Psoas muscle (tissue), 8 donors: ENCODE measurements at regions of chr11 and their contacts with region 1.

Region 1: DNA sequence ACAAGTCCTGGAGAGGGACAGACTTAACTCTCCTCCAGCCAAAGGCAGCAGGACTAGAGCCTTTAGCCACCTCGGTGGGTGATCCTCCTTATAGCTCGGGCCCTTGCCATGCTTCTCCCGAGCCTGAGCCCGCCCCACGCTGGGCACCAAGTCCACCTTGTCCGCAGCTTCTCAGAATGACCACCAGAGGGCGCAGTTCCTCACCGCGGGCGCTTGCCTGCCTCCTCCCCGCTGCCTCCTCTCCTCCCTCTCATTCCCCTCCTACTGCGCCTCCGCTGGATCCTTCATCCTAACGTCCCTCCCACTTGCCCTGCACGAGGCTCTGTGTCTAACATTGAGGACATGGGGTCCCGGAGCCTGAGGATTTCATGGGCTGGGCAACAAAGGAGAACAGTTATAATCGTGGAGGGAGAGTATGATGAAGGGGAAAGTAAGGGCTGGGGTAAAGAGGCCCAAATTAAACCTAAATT is 11.3 kb upstream of the MOGAT2 start:
- DNase-seq: peak; percentile 67 to 80
- ATAC-seq: peak; percentile 78 to 97 (median 94)
- H3K4me3 ChIP-seq: no peak overlapping the region
- H3K27ac ChIP-seq: no peak overlapping the region
- H3K4me1 ChIP-seq: no peaks in the 10 kb centered on the region
- H3K27me3 ChIP-seq: no peaks in the 10 kb centered on the region
- CTCF ChIP-seq: peak; percentile 91

Region 2: DNA sequence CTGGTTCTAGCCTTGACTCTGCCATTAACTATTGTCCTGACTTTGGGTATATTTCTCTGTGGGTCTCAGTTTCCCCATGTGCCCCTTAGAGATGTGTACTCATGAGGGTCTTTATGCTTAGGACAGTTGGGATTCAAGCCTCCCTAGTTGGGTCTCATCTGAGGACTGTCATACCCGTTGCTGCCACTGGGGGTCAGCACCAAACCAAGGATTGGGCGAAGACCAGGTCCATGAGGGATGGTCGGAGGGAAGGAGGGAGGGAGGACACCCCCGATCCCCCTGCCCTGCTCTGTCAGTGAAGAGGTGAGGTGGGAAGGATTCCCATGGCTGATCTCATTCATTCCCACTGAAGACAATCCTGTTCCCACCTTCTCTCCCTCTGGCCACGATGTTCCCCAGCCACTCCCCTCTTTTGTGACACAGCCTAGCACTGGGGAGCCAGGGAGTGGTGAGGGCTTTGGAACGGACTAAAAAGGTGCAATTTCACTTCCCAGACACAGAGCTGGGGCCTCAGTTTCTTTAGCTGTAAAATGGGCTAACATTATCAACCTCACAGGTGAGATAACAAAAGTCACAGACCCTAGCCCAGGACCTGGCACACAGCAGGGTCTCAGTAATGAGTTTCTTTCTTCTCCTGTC is 260.9 kb before region 1 on chr11:
- intact Hi-C with region 1: no loop called
- DNase-seq: peak; percentile 75 to 84
- ATAC-seq: peak; percentile 83 to 95 (median 87)
- H3K4me3 ChIP-seq: no peak overlapping the region
- H3K27ac ChIP-seq: no peak overlapping the region
- H3K4me1 ChIP-seq: no peaks in the 10 kb centered on the region
- H3K27me3 ChIP-seq: no peaks in the 10 kb centered on the region
- CTCF ChIP-seq: peak; percentile 99

Region 3: GRCh38 chr11:75562048-75562835 is 144.1 kb before region 1 on chr11 and contains the start of gene SERPINH1:
- intact Hi-C with region 1: loop called in 1 of 2 experiments (anchors 10 kb)
- DNase-seq: peak; percentile 88 to 93
- ATAC-seq: peak; percentile 87 to 92 (median 88)
- H3K4me3 ChIP-seq: peak within 1 kb of the TSS; percentile 99
- H3K27ac ChIP-seq: peak within 1 kb of the TSS; percentile 100
- H3K4me1 ChIP-seq: peaks cover 50% of the 10 kb centered on the region
- H3K27me3 ChIP-seq: no peaks in the 10 kb centered on the region
- CTCF ChIP-seq: no peak
- total RNA-seq, gene SERPINH1: 27.7 to 43.3 (median 31.3) TPM

Region 4: GRCh38 chr11:75867775-75868374 is 161.6 kb after region 1 on chr11:
- intact Hi-C with region 1: loop called in 1 of 2 experiments (anchors 5 kb)
- DNase-seq: no peak
- ATAC-seq: peak; percentile 61 to 88 (median 68)
- H3K4me3 ChIP-seq: no peak overlapping the region
- H3K27ac ChIP-seq: no peak overlapping the region
- H3K4me1 ChIP-seq: peaks cover 4% of the 10 kb centered on the region
- H3K27me3 ChIP-seq: no peaks in the 10 kb centered on the region
- CTCF ChIP-seq: peak; percentile 90